Heart left ventricle (tissue), 16 donors: ENCODE measurements at regions of chr5 and their contacts with region 1.

Region 1: DNA sequence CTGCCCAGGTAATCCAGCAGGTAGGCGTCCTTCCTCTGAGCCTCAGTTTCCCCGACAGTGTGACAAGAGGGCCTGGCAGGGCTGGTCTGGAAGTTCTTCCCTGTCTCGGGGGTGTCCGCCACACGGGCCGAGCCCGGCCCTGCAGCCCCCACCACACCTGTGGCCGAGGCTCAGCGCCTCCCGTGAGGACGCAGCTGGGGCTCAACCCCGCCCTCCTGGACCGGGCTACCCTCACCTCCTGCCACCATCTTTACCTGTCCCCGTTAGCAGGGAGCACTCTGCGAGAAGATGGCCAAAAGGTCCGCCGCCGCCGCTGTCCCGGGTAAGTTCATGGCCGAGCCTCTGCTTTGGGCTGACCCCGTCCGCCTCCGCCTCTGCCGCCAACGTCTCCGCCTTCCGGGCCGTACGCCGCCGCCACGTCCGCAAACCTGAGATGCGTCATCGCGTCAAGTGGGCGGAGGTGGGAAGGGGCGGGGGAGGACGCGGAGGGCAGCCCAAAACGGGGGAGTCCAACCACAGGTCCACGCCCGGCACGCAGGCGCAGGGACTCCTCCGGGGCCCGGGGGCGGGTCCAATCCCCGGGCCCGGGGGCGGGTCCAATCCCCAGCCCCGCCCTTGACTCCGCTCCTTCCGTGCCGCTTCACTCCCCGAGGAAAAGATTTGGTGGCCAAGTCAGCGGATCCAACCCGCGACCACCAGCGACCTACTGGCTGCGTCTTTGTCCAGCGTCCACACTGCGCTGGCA is at the start of gene LYSMD3:
- DNase-seq: peak; percentile 98 to 99 (median 98)
- ATAC-seq: peak; percentile 99 to 100 (median 100)
- H3K4me3 ChIP-seq: peak within 1 kb of the TSS; percentile 79 to 99 (median 94)
- H3K27ac ChIP-seq: peak within 1 kb of the TSS; percentile 84 to 98 (median 96)
- H3K4me1 ChIP-seq: peaks cover 0 to 34% (median 27%) of the 10 kb centered on the region in 12 donors
- H3K27me3 ChIP-seq: peaks cover 0 to 11% (median 0%) of the 10 kb centered on the region in 9 donors
- CTCF ChIP-seq: no peak
- POLR2A ChIP-seq: peak in 1 of 2 donors; percentile 85
- total RNA-seq, gene LYSMD3: 13.1 to 23.3 (median 18.4) TPM

Region 2: GRCh38 chr5:90409318-90410177 is 119.8 kb before region 1 on chr5 and contains the start of gene CETN3:
- intact Hi-C with region 1: loop called in 2 of 10 experiments (anchors 1 to 2 kb)
- DNase-seq: peak; percentile 94 to 96 (median 95)
- ATAC-seq: peak; percentile 98
- H3K4me3 ChIP-seq: peak within 1 kb of the TSS; percentile 58 to 96 (median 80)
- H3K27ac ChIP-seq: peak within 1 kb of the TSS; percentile 91 to 99 (median 97)
- H3K4me1 ChIP-seq: peaks cover 0 to 23% (median 13%) of the 10 kb centered on the region in 12 donors
- H3K27me3 ChIP-seq: no peaks in the 10 kb centered on the region
- CTCF ChIP-seq: peak in 1 of 12 donors; percentile 17
- POLR2A ChIP-seq: peak in 1 of 2 donors; percentile 91
- total RNA-seq, gene CETN3: 9.3 to 22.9 (median 18.9) TPM

Region 3: GRCh38 chr5:90434116-90434714 is 95.2 kb before region 1 on chr5:
- intact Hi-C with region 1: loop called in 5 of 10 experiments (anchors 1 to 10 kb)
- DNase-seq: peak in 2 of 5 donors; percentile 22 to 31
- ATAC-seq: peak in 1 of 4 donors; percentile 59
- H3K4me3 ChIP-seq: no peak overlapping the region
- H3K27ac ChIP-seq: no peak overlapping the region
- H3K4me1 ChIP-seq: peaks cover 0 to 4% (median 0%) of the 10 kb centered on the region in 12 donors
- H3K27me3 ChIP-seq: no peaks in the 10 kb centered on the region
- CTCF ChIP-seq: peak; percentile 34 to 65 (median 52)
- POLR2A ChIP-seq: no peak

Region 4: DNA sequence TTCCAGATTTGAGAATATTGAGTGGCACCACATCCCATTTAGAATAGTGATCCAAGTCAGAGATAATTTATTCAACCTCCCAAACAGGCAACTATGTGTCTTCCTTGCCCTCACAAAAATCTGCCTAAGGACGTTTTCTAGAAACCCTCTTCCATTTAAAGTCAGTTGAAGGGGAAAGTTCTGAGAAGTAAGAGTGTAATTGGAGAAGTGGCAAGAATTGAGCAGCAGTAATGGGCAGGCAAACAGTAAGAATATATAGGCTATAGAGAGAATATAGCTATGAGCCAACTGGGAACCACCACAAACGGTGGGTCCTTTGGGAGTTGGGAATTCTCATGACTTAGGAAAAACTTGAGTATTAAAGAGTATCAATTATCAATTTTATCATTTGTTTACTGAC is 88.7 kb before region 1 on chr5:
- intact Hi-C with region 1: loop called (anchors 1 to 10 kb)
- DNase-seq: no peak
- ATAC-seq: no peak
- H3K4me3 ChIP-seq: no peak overlapping the region
- H3K27ac ChIP-seq: no peak overlapping the region
- H3K4me1 ChIP-seq: peaks cover 0 to 6% (median 0%) of the 10 kb centered on the region in 12 donors
- H3K27me3 ChIP-seq: no peaks in the 10 kb centered on the region
- CTCF ChIP-seq: no peak
- POLR2A ChIP-seq: no peak

Region 5: DNA sequence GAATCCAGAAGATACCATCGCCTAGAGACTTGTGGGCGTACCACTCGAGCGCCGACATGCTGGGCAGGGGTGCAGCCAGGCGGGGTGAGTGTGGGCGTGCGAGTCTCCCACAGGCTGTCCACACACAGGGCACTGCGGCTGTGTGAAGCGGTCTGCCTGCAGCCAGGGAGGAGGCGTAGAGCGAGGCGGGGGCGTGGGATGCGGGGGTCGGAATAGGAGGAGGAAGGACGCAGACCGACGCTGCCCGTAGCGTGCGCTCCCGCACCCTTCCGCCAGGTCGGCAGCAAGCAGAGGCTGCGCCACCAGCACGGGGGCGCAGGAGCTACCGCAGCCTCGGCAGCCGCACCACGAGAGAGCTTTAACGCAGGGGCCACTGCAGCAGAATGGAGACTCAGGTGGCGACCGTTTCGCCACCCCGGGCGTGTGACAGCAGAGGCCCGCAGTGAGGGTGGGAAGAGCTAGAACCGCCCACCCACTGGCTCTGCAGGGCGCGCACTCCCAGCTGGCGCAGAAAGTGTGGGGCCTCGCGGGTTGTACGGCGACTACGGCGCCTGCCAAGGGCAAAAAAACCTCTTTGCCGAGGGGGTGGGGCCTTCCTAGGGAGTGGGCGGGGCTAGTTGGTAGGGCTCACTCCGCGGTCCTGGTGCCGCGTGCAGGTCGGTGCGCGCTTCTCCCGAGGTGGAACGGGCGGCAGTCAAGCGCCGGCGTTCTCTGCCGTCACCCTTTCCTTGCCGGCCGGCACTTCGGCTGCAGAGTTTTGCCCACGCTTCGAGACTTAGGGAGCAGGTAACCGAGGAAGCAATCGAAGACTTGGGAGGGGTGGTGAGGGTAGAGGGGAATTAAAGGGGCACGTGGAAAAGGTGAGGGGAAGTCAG is 54.9 kb before region 1 on chr5 and contains the starts of genes MBLAC2 and POLR3G:
- intact Hi-C with region 1: loop called (anchors 1 to 10 kb)
- DNase-seq: peak; percentile 92 to 95 (median 94)
- ATAC-seq: peak; percentile 98 to 99 (median 98)
- H3K4me3 ChIP-seq: peak within 1 kb of the TSS; percentile 51 to 91 (median 82)
- H3K27ac ChIP-seq: peak within 1 kb of the TSS; percentile 21 to 90 (median 82)
- H3K4me1 ChIP-seq: peaks cover 0 to 21% (median 13%) of the 10 kb centered on the region in 12 donors
- H3K27me3 ChIP-seq: no peaks in the 10 kb centered on the region
- CTCF ChIP-seq: peak in 11 of 12 donors; percentile 13 to 56 (median 44)
- POLR2A ChIP-seq: peak in 1 of 2 donors; percentile 82
- total RNA-seq, gene MBLAC2: 2.4 to 5.3 (median 3.7) TPM
- total RNA-seq, gene POLR3G: 0.30 to 1.6 (median 0.67) TPM